ENCODE measurements at regions of chr11 and their contacts with region 1.

Region 1: DNA sequence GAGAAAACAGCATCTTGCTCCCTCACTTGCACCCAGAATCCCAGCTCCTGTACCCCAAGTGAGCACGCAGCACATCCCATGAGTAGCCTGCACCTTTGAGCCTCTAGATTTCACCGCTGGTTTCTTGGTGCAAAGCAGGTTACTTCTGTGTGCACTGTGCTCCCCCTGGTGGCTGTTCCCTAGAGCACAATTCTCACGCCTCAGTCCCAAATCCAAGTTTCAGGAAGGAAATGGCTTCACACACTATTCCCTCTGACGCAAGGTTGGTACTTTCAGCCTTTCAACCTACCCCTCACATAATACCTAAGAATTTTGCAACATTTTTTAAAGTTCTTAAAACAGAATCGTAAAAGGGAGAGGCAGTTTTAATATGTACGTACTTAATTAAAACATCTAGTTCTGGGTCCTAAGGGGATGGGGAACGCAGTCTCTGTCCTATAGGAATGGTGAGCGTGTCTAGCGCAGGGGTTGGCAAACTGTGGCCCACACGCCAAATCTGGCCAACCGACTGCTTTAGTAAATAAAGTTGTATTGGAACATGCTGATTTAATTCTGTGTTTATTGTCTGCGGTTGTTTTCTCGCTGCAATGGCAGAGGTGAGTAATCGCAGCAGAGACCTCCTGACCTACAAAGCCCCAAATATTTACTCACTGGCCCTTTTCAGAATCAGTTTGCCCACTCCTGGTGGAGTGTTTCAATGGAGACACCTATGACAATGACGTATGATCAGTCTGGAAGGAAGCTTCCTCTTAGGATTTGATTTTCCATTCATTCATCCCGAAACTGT is 27.5 kb downstream of the DHCR7 start:
- DNase-seq: peak; percentile 56
- H3K4me3 ChIP-seq: no peak overlapping the region
- H3K27ac ChIP-seq: no peak overlapping the region
- H3K4me1 ChIP-seq: no peaks in the 10 kb centered on the region
- H3K27me3 ChIP-seq: no peaks in the 10 kb centered on the region
- CTCF ChIP-seq: peak; percentile 52 to 67 (median 62)
- EP300 ChIP-seq: no peak
- POLR2A ChIP-seq: no peak

Region 2: DNA sequence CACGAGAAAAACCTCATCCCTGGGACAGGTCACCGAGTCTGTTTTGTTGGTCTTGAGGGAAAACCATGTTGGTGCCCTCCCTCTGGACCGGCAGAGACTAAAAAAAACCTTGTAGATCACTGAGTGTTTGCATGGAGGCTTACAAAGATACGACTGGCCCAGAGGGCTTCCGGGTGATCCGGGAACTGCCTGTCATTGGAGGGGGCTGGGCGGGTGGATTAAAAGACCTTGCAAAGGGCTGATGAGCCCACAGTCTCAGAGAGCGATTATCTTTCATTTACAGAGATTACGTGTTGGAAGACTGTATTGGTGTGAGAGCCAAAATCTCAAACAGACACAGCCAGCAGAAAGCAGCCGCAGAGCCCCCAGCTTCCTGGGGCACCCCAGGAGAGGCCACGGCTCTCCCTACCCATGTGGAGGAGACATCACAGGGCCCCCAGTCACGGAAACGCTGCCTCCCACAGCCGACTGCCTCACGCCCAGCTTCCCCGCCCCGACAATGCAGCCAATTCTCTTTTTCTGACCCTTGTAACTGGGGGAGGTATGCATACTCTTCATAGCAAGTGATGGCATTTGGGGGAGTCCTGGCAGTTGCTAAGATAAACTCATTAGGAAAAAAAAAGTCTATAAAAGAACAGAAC is 595.9 kb before region 1 on chr11:
- in situ Hi-C with region 1: loop called in 3 of 4 experiments (anchors 25 kb)
- intact Hi-C with region 1: no loop called
- DNase-seq: no peak
- H3K4me3 ChIP-seq: no peak overlapping the region
- H3K27ac ChIP-seq: no peak overlapping the region
- H3K4me1 ChIP-seq: peaks cover 0 to 12% (median 3%) of the 10 kb centered on the region in 4 donors
- H3K27me3 ChIP-seq: no peaks in the 10 kb centered on the region
- CTCF ChIP-seq: no peak
- EP300 ChIP-seq: no peak
- POLR2A ChIP-seq: no peak

Region 3: GRCh38 chr11:70871881-70872280 is 548.8 kb before region 1 on chr11:
- in situ Hi-C with region 1: no loop called
- intact Hi-C with region 1: no loop called
- DNase-seq: peak; percentile 18
- H3K4me3 ChIP-seq: no peak overlapping the region
- H3K27ac ChIP-seq: no peak overlapping the region
- H3K4me1 ChIP-seq: no peaks in the 10 kb centered on the region
- H3K27me3 ChIP-seq: no peaks in the 10 kb centered on the region
- CTCF ChIP-seq: no peak
- EP300 ChIP-seq: no peak
- POLR2A ChIP-seq: no peak

Region 4: GRCh38 chr11:71355266-71355665 is 65.4 kb before region 1 on chr11:
- in situ Hi-C with region 1: no loop called
- intact Hi-C with region 1: no loop called
- DNase-seq: no peak
- H3K4me3 ChIP-seq: no peak overlapping the region
- H3K27ac ChIP-seq: no peak overlapping the region
- H3K4me1 ChIP-seq: no peaks in the 10 kb centered on the region
- H3K27me3 ChIP-seq: no peaks in the 10 kb centered on the region
- CTCF ChIP-seq: no peak
- EP300 ChIP-seq: no peak
- POLR2A ChIP-seq: no peak

Measured in transverse colon (tissue), 4 donors.